ENCODE measurements at regions of chr17 and their contacts with region 1.

Region 1: DNA sequence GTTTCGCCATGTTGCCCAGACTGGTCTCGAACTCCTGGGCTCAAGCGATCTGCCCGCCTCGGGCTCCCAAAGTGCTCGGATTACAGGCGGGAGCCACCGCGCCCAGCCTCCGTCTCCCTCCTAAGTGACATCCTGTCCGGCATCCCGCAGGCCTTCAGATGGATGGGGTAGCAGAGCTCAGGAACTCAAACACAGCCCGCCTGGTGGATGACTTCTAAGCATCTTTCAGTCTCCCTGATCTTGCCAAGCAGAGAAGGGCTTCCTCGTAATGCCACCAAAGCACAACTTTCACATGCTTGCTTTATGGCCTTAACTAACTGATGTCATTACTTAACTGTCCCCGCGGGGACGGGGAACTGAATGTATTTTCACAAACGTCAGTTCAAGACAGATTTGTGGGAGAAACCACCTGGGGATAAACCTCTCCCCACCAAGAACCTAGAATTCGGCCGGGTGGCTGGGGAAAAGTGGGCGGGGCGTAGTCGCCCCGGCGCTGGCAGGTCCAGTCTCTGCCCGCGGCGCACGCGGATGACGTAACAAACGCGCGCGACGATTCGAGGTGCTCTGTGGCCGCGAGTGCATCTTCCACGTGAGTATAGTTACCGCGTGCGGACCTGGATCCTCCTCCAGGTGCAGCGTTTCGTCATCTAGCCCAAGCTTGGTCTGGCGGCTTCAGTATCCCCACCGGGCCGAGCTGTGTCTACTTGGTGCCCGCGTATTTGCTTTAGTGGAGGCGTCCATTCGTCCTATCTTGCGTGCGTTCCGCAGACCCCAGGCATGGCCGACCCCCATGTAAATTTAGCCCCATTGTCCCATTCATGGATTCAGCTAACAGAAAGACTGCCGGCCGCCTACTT is at the start of gene PFAS:
- DNase-seq: peak; percentile 91 to 98 (median 94)
- ATAC-seq: peak; percentile 64
- H3K4me3 ChIP-seq: peak within 1 kb of the TSS; percentile 94
- H3K4me3 Mint-ChIP-seq: peak within 1 kb of the TSS; percentile 92 to 100 (median 99)
- H3K27ac ChIP-seq: peak within 1 kb of the TSS; percentile 100
- H3K27ac Mint-ChIP-seq: peak within 1 kb of the TSS; percentile 97 to 100 (median 100)
- H3K4me1 ChIP-seq: peaks cover 28 to 35% of the 10 kb centered on the region in 2 donors
- H3K4me1 Mint-ChIP-seq: peaks cover 30 to 56% (median 50%) of the 10 kb centered on the region in 7 donors
- H3K27me3 ChIP-seq: no peaks in the 10 kb centered on the region
- H3K27me3 Mint-ChIP-seq: no peaks in the 10 kb centered on the region
- total RNA-seq, gene PFAS: 31.6 to 68.9 (median 31.9) TPM

Region 2: GRCh38 chr17:7887482-7888183 is 361.3 kb before region 1 on chr17:
- CTCF ChIA-PET with region 1: no interaction called
- POLR2A ChIA-PET with region 1: no interaction called
- intact Hi-C with region 1: loop called in 1 of 2 experiments (anchors 2 kb)
- DNase-seq: peak; percentile 41 to 96 (median 93)
- ATAC-seq: peak; percentile 83
- H3K4me3 ChIP-seq: peak overlapping the region; percentile 61
- H3K4me3 Mint-ChIP-seq: no peak overlapping the region
- H3K27ac ChIP-seq: peak overlapping the region; percentile 91
- H3K27ac Mint-ChIP-seq: no peak overlapping the region
- H3K4me1 ChIP-seq: peaks cover 28 to 29% of the 10 kb centered on the region in 2 donors
- H3K4me1 Mint-ChIP-seq: peaks cover 0 to 17% (median 8%) of the 10 kb centered on the region in 7 donors
- H3K27me3 ChIP-seq: no peaks in the 10 kb centered on the region
- H3K27me3 Mint-ChIP-seq: no peaks in the 10 kb centered on the region

Region 3: GRCh38 chr17:8156246-8156992 is 92.6 kb before region 1 on chr17:
- CTCF ChIA-PET with region 1: interaction called, 6 read pairs
- POLR2A ChIA-PET with region 1: interaction called, 61 read pairs
- intact Hi-C with region 1: loop called (anchors 1 to 5 kb)
- DNase-seq: peak; percentile 96 to 100 (median 100)
- ATAC-seq: peak; percentile 83
- H3K4me3 ChIP-seq: peak overlapping the region; percentile 93
- H3K4me3 Mint-ChIP-seq: no peak overlapping the region
- H3K27ac ChIP-seq: peak overlapping the region; percentile 97
- H3K27ac Mint-ChIP-seq: no peak overlapping the region
- H3K4me1 ChIP-seq: peaks cover 58 to 75% of the 10 kb centered on the region in 2 donors
- H3K4me1 Mint-ChIP-seq: peaks cover 33 to 73% (median 65%) of the 10 kb centered on the region in 7 donors
- H3K27me3 ChIP-seq: no peaks in the 10 kb centered on the region
- H3K27me3 Mint-ChIP-seq: no peaks in the 10 kb centered on the region

Region 4: GRCh38 chr17:8189711-8190477 is 59.1 kb before region 1 on chr17 and contains the start of gene BORCS6:
- CTCF ChIA-PET with region 1: interaction called, 4 read pairs
- POLR2A ChIA-PET with region 1: interaction called, 140 read pairs
- intact Hi-C with region 1: loop called (anchors 1 kb)
- DNase-seq: peak; percentile 76 to 97 (median 94)
- ATAC-seq: peak; percentile 81
- H3K4me3 ChIP-seq: peak within 1 kb of the TSS; percentile 91
- H3K4me3 Mint-ChIP-seq: peak within 1 kb of the TSS in 2 of 10 donors; percentile 15 to 49
- H3K27ac ChIP-seq: peak within 1 kb of the TSS; percentile 87
- H3K27ac Mint-ChIP-seq: peak within 1 kb of the TSS in 7 of 9 donors; percentile 46 to 94 (median 88)
- H3K4me1 ChIP-seq: peaks cover 33 to 38% of the 10 kb centered on the region in 2 donors
- H3K4me1 Mint-ChIP-seq: peaks cover 8 to 13% (median 13%) of the 10 kb centered on the region in 7 donors
- H3K27me3 ChIP-seq: no peaks in the 10 kb centered on the region
- H3K27me3 Mint-ChIP-seq: no peaks in the 10 kb centered on the region
- total RNA-seq, gene BORCS6: 5.4 to 16.1 (median 13.4) TPM

Region 5: GRCh38 chr17:8231701-8232100 is 17.3 kb before region 1 on chr17:
- CTCF ChIA-PET with region 1: interaction called, 70 read pairs
- POLR2A ChIA-PET with region 1: interaction called, 436 read pairs
- intact Hi-C with region 1: no loop called
- DNase-seq: no peak
- ATAC-seq: no peak
- H3K4me3 ChIP-seq: no peak overlapping the region
- H3K4me3 Mint-ChIP-seq: no peak overlapping the region
- H3K27ac ChIP-seq: no peak overlapping the region
- H3K27ac Mint-ChIP-seq: peak overlapping the region in 2 of 9 donors; percentile 21 to 52
- H3K4me1 ChIP-seq: peaks cover 5 to 9% of the 10 kb centered on the region in 2 donors
- H3K4me1 Mint-ChIP-seq: peaks cover 11 to 46% (median 31%) of the 10 kb centered on the region in 7 donors
- H3K27me3 ChIP-seq: no peaks in the 10 kb centered on the region
- H3K27me3 Mint-ChIP-seq: no peaks in the 10 kb centered on the region

Region 6: GRCh38 chr17:8294814-8295316 is 45.9 kb after region 1 on chr17:
- CTCF ChIA-PET with region 1: interaction called, 7 read pairs
- POLR2A ChIA-PET with region 1: interaction called, 121 read pairs
- intact Hi-C with region 1: loop called (anchors 1 kb)
- DNase-seq: no peak
- ATAC-seq: no peak
- H3K4me3 ChIP-seq: peak overlapping the region; percentile 96
- H3K4me3 Mint-ChIP-seq: peak overlapping the region; percentile 87 to 97 (median 90)
- H3K27ac ChIP-seq: peak overlapping the region; percentile 86
- H3K27ac Mint-ChIP-seq: peak overlapping the region; percentile 81 to 98 (median 93)
- H3K4me1 ChIP-seq: peaks cover 4 to 13% of the 10 kb centered on the region in 2 donors
- H3K4me1 Mint-ChIP-seq: peaks cover 23 to 45% (median 38%) of the 10 kb centered on the region in 7 donors
- H3K27me3 ChIP-seq: no peaks in the 10 kb centered on the region
- H3K27me3 Mint-ChIP-seq: no peaks in the 10 kb centered on the region

Region 7: GRCh38 chr17:8354236-8354635 is 105.3 kb after region 1 on chr17:
- CTCF ChIA-PET with region 1: no interaction called
- POLR2A ChIA-PET with region 1: no interaction called
- intact Hi-C with region 1: no loop called
- DNase-seq: no peak
- ATAC-seq: no peak
- H3K4me3 ChIP-seq: no peak overlapping the region
- H3K4me3 Mint-ChIP-seq: no peak overlapping the region
- H3K27ac ChIP-seq: no peak overlapping the region
- H3K27ac Mint-ChIP-seq: no peak overlapping the region
- H3K4me1 ChIP-seq: no peaks in the 10 kb centered on the region
- H3K4me1 Mint-ChIP-seq: peaks cover 0 to 3% (median 0%) of the 10 kb centered on the region in 7 donors
- H3K27me3 ChIP-seq: no peaks in the 10 kb centered on the region
- H3K27me3 Mint-ChIP-seq: peaks cover 0 to 16% (median 5%) of the 10 kb centered on the region in 5 donors

Region 8: DNA sequence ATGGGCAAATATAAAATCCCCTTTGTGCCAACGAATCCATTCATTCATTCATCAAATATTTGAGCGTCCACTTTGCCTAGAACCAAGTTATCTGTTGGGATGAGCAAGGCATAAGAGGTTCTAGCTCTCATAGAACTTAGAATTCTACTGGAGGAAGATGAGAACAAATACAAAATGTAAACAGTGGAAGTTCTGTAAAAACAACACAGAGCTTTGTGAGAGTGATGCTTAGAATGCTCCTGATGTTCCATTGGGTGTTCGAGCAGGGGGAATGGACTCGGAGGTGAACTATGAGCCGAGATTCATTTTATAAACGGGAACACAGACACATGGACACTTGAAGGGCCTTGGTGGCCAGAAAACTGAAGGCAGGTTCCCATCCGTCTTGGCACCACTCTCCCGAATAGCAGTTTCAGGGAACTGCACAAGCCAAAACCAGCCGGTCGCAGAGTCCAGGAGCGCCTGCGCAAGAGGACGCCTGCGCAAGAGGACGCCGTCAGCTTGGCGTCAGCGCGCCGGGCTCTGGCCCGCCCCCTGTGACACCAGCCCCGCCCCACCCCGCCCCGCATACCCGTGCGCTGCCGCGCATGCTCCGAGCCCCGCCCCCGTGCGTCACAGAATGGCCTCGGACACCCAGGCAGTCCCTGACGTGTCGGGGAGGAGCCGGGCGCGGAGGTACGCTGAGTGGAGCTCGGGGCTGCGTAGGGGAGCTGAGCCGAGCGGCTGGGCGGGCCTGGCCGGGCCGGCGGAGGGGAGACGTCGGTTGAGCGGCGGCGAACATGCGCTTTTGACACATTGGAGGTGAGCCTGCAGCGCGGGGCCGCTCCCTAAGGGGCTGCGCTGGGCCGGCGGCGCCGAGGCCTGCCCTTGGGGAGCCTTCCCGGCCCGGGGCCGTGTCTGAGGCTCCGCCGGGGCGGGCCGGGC is 186.5 kb after region 1 on chr17 and contains the start of gene NDEL1:
- CTCF ChIA-PET with region 1: no interaction called
- POLR2A ChIA-PET with region 1: interaction called, 3 read pairs
- intact Hi-C with region 1: loop called in 1 of 2 experiments (anchors 5 kb)
- DNase-seq: peak; percentile 97 to 99 (median 99)
- ATAC-seq: peak; percentile 95
- H3K4me3 ChIP-seq: peak within 1 kb of the TSS; percentile 81
- H3K4me3 Mint-ChIP-seq: peak within 1 kb of the TSS; percentile 94 to 99 (median 96)
- H3K27ac ChIP-seq: peak within 1 kb of the TSS; percentile 100
- H3K27ac Mint-ChIP-seq: peak within 1 kb of the TSS; percentile 96 to 100 (median 98)
- H3K4me1 ChIP-seq: peaks cover 10 to 22% of the 10 kb centered on the region in 2 donors
- H3K4me1 Mint-ChIP-seq: peaks cover 9 to 46% (median 37%) of the 10 kb centered on the region in 7 donors
- H3K27me3 ChIP-seq: no peaks in the 10 kb centered on the region
- H3K27me3 Mint-ChIP-seq: no peaks in the 10 kb centered on the region
- total RNA-seq, gene NDEL1: 72.6 to 274 (median 116) TPM